Left colon (tissue), 2 donors: ENCODE measurements at regions of chr1 and their contacts with region 1.

Region 1: DNA sequence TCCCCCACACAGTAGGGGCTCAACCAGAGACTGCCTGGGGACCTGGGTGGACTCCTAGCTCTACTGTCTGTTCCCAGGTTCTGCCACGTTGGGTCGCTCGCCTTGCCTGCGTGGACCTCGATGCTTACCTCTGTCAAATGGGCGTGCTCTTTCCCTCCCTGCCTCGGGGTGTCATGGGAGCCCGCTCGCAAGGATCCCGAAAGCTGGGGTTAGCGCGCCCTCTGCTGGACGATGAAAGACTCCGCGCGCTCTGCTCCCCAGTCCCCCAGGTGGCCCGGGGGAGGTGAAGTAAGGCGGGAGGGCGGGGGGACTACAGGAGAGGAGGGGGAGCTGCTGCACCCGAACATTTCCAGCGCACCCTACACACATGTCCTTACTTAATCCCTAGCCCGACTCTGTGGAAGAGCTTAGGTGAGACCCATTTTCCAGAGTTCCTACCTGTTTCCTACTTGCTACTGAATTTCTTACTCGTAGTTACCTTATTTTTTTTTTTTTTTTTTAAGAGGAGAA is 2.3 kb upstream of the BSND start:
- DNase-seq: peak; percentile 63 to 78
- ATAC-seq: peak; percentile 88

Region 2: GRCh38 chr1:53919675-53920066 is 1076.7 kb before region 1 on chr1:
- intact Hi-C with region 1: no loop called
- DNase-seq: no peak
- ATAC-seq: no peak

Region 3: DNA sequence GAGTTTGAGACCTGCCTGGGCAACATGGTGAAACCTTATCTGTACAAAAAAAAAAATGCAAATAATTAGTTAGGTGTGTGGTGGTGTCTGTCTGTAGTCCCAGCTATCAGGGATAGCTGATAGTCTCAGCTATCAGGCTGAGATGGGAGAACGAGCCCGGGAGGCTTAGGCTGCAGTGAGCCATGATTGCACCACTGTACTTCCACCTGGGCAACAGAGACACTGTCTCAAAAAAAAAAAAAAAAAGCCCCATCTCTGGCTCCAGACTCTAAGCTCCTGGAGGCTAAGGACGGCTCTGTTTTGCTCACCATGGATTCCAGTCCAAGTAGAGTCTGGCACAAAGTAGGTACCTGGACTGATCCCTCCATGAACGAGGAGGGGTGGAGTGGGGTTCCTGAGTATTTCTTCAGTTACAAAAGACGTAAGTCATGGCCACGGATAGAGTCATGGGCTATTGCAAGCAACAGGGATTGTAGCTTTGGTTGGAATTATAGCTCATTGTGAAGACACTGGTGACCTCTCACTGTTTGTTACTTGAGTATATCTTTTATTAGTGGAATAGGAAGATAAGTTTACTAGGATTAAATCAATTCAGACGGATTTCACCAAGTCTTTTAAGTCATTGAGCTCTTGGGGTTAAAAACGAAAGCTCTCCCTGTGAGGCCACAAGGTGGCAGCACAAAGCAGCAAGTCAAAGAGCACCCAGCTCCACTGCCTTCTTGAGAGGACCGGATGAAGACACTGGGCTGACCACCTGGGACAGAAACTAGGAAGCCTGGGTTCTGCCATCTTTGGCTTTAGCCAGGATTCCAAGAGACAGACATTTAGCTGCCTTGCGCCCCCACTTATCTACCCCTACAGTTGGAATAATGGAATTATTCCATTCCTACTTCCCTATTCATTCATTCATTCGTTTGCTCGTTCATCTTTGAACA is 51.5 kb before region 1 on chr1:
- intact Hi-C with region 1: loop called (anchors 2 to 5 kb)
- DNase-seq: peak; percentile 77 to 80
- ATAC-seq: peak; percentile 67

Region 4: DNA sequence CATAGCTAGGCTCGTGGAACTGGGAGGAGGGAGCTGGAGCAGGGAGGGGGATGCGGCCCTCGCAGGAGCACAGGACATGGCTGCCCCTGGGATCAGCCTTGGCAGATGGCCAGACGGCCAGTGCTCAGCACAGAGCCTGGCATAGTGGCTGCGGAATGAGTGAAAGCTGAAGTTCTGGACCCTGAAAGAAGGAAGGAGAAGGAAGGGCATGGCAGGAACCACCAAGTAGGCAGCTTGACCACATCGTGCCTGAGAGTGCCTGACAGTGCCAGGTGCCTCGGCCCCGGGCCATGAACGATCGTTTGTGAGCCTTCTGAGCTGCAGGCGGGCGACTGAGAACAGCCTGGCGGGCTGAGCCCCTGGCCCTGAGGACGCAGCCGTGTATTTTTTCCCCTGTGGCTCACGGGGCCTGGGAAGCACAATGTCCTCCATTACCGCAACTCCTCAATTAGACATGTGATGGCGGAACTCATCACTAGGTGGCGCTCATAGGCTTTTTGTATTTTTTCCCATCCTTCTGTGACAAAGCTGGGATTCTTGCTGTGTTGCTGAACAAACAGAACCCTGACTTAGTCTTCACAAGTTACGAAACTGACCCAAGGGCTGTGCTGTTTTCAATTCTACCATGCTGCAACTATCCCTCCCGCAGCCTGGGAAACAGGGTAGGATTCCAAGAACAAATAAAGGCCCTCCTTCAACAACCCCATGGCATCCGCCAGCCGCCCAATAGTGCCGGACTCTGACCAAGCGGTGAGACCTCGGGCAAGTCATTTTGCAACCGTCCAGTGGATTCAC is 45.8 kb before region 1 on chr1:
- intact Hi-C with region 1: loop called (anchors 2 to 5 kb)
- DNase-seq: peak; percentile 48 to 80
- ATAC-seq: peak; percentile 70